Activated CD4-positive, alpha-beta memory T cell treated with anti-CD3 and anti-CD28 coated beads for 36 hours (primary cell): ENCODE measurements at regions of chr12 and their contacts with region 1.

Region 1: GRCh38 chr12:91778938-91779400 is 366.7 kb downstream of the BTG1 start:
- DNase-seq: peak; percentile 65
- H3K4me3 Mint-ChIP-seq: peak overlapping the region; percentile 48
- H3K27ac Mint-ChIP-seq: peak overlapping the region; percentile 75
- H3K4me1 Mint-ChIP-seq: peaks cover 27% of the 10 kb centered on the region
- H3K27me3 Mint-ChIP-seq: peaks cover 3% of the 10 kb centered on the region

Region 2: GRCh38 chr12:91687052-91688017 is 91.6 kb before region 1 on chr12:
- CTCF ChIA-PET with region 1: no interaction called
- POLR2A ChIA-PET with region 1: no interaction called
- intact Hi-C with region 1: loop called (anchors 5 kb)
- DNase-seq: peak; percentile 19
- H3K4me3 Mint-ChIP-seq: no peak overlapping the region
- H3K27ac Mint-ChIP-seq: peak overlapping the region; percentile 14
- H3K4me1 Mint-ChIP-seq: peaks cover 15% of the 10 kb centered on the region
- H3K27me3 Mint-ChIP-seq: no peaks in the 10 kb centered on the region

Region 3: GRCh38 chr12:91722072-91722471 is 56.9 kb before region 1 on chr12:
- CTCF ChIA-PET with region 1: no interaction called
- POLR2A ChIA-PET with region 1: no interaction called
- intact Hi-C with region 1: loop called (anchors 2 kb)
- DNase-seq: peak; percentile 50
- H3K4me3 Mint-ChIP-seq: no peak overlapping the region
- H3K27ac Mint-ChIP-seq: no peak overlapping the region
- H3K4me1 Mint-ChIP-seq: peaks cover 6% of the 10 kb centered on the region
- H3K27me3 Mint-ChIP-seq: peaks cover 2% of the 10 kb centered on the region

Region 4: DNA sequence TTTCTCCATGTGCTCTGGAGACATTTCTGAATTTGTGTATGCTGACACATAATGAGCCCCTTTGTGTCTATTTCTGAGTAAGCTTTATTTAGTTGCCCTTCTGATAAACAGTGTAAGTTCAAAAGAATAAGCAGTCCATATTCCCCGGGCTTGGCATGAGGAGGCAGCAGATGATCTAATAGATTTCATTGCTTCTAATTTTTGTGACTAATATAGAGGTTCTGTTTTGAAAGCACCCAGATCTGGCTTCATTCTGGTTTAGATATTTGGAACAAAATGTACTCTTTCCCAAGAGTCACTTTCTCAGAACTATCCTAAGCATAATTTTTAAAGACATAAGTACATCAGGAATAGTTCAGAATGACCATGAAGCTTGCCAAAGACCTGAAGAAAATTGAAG is 75.8 kb after region 1 on chr12:
- CTCF ChIA-PET with region 1: no interaction called
- POLR2A ChIA-PET with region 1: no interaction called
- intact Hi-C with region 1: loop called (anchors 5 kb)
- DNase-seq: no peak
- H3K4me3 Mint-ChIP-seq: no peak overlapping the region
- H3K27ac Mint-ChIP-seq: no peak overlapping the region
- H3K4me1 Mint-ChIP-seq: peaks cover 31% of the 10 kb centered on the region
- H3K27me3 Mint-ChIP-seq: no peaks in the 10 kb centered on the region

Region 5: GRCh38 chr12:92218394-92219077 is 439.6 kb after region 1 on chr12:
- CTCF ChIA-PET with region 1: no interaction called
- POLR2A ChIA-PET with region 1: no interaction called
- intact Hi-C with region 1: loop called (anchors 2 kb)
- DNase-seq: no peak
- H3K4me3 Mint-ChIP-seq: no peak overlapping the region
- H3K27ac Mint-ChIP-seq: peak overlapping the region; percentile 74
- H3K4me1 Mint-ChIP-seq: peaks cover 23% of the 10 kb centered on the region
- H3K27me3 Mint-ChIP-seq: no peaks in the 10 kb centered on the region

Region 6: GRCh38 chr12:92593734-92594402 is 814.9 kb after region 1 on chr12:
- CTCF ChIA-PET with region 1: no interaction called
- POLR2A ChIA-PET with region 1: no interaction called
- intact Hi-C with region 1: loop called (anchors 5 kb)
- DNase-seq: peak; percentile 87
- H3K4me3 Mint-ChIP-seq: peak overlapping the region; percentile 25
- H3K27ac Mint-ChIP-seq: peak overlapping the region; percentile 92
- H3K4me1 Mint-ChIP-seq: peaks cover 80% of the 10 kb centered on the region
- H3K27me3 Mint-ChIP-seq: no peaks in the 10 kb centered on the region